Esophagus muscularis mucosa (tissue), 4 donors: ENCODE measurements at regions of chr1 and their contacts with region 1.

Region 1: GRCh38 chr1:68120136-68120791 is 69.8 kb upstream of the DIRAS3 start:
- DNase-seq: peak; percentile 93
- H3K4me3 ChIP-seq: no peak overlapping the region
- H3K27ac ChIP-seq: peak overlapping the region; percentile 70 to 73 (median 72)
- H3K4me1 ChIP-seq: peaks cover 4 to 42% (median 31%) of the 10 kb centered on the region in 4 donors
- H3K27me3 ChIP-seq: no peaks in the 10 kb centered on the region
- CTCF ChIP-seq: peak; percentile 82 to 84 (median 83)
- EP300 ChIP-seq: no peak
- POLR2A ChIP-seq: no peak

Region 2: GRCh38 chr1:68321084-68321685 is 200.9 kb after region 1 on chr1:
- intact Hi-C with region 1: loop called (anchors 2 kb)
- DNase-seq: no peak
- H3K4me3 ChIP-seq: no peak overlapping the region
- H3K27ac ChIP-seq: peak overlapping the region; percentile 72 to 78 (median 76)
- H3K4me1 ChIP-seq: peaks cover 0 to 57% (median 40%) of the 10 kb centered on the region in 4 donors
- H3K27me3 ChIP-seq: no peaks in the 10 kb centered on the region
- CTCF ChIP-seq: peak; percentile 78 to 82 (median 79)
- EP300 ChIP-seq: no peak
- POLR2A ChIP-seq: no peak